ENCODE measurements at regions of chr3 and their contacts with region 1.

Region 1: DNA sequence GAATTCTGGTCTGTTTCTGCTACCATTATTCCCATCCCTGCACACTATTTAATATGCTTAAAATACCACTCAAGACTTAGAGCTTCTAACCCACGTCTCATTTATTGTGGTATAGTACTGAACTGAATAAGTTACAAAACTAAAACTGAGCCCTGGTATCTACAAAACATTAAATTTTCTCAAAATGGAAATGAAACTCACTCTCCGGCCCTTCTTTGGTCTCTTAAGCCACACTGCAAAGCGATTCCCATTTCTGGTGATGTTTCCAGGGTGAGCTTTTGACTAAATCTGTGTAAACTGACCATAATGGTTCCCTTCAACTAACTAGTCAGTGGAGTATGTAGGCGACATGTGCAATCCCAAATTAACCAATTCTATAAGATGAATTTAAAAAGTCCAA is 18.6 kb downstream of the KPNA4 start:
- DNase-seq: no peak
- ATAC-seq: no peak
- H3K4me3 ChIP-seq: no peak overlapping the region
- H3K27ac ChIP-seq: no peak overlapping the region
- H3K4me1 ChIP-seq: no peaks in the 10 kb centered on the region
- H3K27me3 ChIP-seq: no peaks in the 10 kb centered on the region
- CTCF ChIP-seq: no peak

Region 2: DNA sequence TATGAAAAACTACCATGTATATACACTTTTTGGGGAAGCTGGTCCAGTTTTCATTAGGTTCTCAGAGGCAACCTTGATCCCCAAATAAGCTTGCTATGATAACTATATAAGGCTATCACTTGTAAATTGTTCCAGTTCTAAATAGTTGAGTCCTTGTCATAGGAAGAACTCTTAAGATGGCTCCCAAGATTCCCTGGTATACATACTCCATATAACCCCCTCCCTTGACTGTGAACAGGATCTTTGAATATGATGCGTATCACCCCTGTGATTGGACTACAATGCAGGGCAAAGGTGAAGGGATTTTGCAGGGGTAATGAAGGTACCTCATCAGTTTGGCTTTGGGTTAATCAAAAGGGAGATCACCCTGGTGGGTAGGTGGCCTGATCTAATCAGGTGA is 48.5 kb before region 1 on chr3:
- CTCF ChIA-PET with region 1: no interaction called
- POLR2A ChIA-PET with region 1: interaction called, 14 read pairs
- intact Hi-C with region 1: no loop called
- DNase-seq: no peak
- ATAC-seq: no peak
- H3K4me3 ChIP-seq: no peak overlapping the region
- H3K27ac ChIP-seq: no peak overlapping the region
- H3K4me1 ChIP-seq: no peaks in the 10 kb centered on the region
- H3K27me3 ChIP-seq: no peaks in the 10 kb centered on the region
- CTCF ChIP-seq: no peak

Measured in PC-3 (cell line).